Heart right ventricle (tissue), 16 donors: ENCODE measurements at regions of chr15 and their contacts with region 1.

Region 1: GRCh38 chr15:33592864-33593263 is 282.1 kb downstream of the RYR3 start:
- DNase-seq: no peak
- ATAC-seq: no peak
- H3K4me3 ChIP-seq: no peak overlapping the region
- H3K27ac ChIP-seq: no peak overlapping the region
- H3K4me1 ChIP-seq: no peaks in the 10 kb centered on the region
- H3K27me3 ChIP-seq: no peaks in the 10 kb centered on the region
- CTCF ChIP-seq: no peak

Region 2: GRCh38 chr15:33211176-33211808 is 381.6 kb before region 1 on chr15:
- intact Hi-C with region 1: no loop called
- DNase-seq: peak in 1 of 2 donors; percentile 21
- ATAC-seq: no peak
- H3K4me3 ChIP-seq: no peak overlapping the region
- H3K27ac ChIP-seq: no peak overlapping the region
- H3K4me1 ChIP-seq: no peaks in the 10 kb centered on the region
- H3K27me3 ChIP-seq: no peaks in the 10 kb centered on the region
- CTCF ChIP-seq: no peak

Region 3: GRCh38 chr15:33309602-33310276 is 283.1 kb before region 1 on chr15:
- intact Hi-C with region 1: loop called in 1 of 10 experiments (anchors 10 kb)
- DNase-seq: peak in 1 of 2 donors; percentile 12
- ATAC-seq: peak in 5 of 8 donors; percentile 31 to 58 (median 52)
- H3K4me3 ChIP-seq: no peak overlapping the region
- H3K27ac ChIP-seq: no peak overlapping the region
- H3K4me1 ChIP-seq: peaks cover 0 to 5% (median 0%) of the 10 kb centered on the region in 9 donors
- H3K27me3 ChIP-seq: peaks cover 7 to 74% (median 50%) of the 10 kb centered on the region in 7 donors
- CTCF ChIP-seq: peak in 7 of 9 donors; percentile 4 to 50 (median 24)

Region 4: GRCh38 chr15:34179234-34179633 is 586.4 kb after region 1 on chr15:
- intact Hi-C with region 1: no loop called
- DNase-seq: no peak
- ATAC-seq: no peak
- H3K4me3 ChIP-seq: no peak overlapping the region
- H3K27ac ChIP-seq: no peak overlapping the region
- H3K4me1 ChIP-seq: peaks cover 0 to 10% (median 0%) of the 10 kb centered on the region in 9 donors
- H3K27me3 ChIP-seq: no peaks in the 10 kb centered on the region
- CTCF ChIP-seq: no peak